B cell (primary cell): ENCODE measurements at regions of chr9 and their contacts with region 1.

Region 1: GRCh38 chr9:134210908-134211810 is 46.8 kb upstream of the RNU6ATAC start:
- DNase-seq: no peak
- ATAC-seq: no peak
- H3K4me3 ChIP-seq: no peak overlapping the region
- H3K4me3 Mint-ChIP-seq: no peak overlapping the region
- H3K27ac ChIP-seq: no peak overlapping the region
- H3K27ac Mint-ChIP-seq: no peak overlapping the region
- H3K4me1 ChIP-seq: peaks cover 7 to 9% of the 10 kb centered on the region in 2 donors
- H3K4me1 Mint-ChIP-seq: peaks cover 5% of the 10 kb centered on the region
- H3K27me3 ChIP-seq: no peaks in the 10 kb centered on the region
- H3K27me3 Mint-ChIP-seq: no peaks in the 10 kb centered on the region
- CTCF ChIP-seq: no peak

Region 2: DNA sequence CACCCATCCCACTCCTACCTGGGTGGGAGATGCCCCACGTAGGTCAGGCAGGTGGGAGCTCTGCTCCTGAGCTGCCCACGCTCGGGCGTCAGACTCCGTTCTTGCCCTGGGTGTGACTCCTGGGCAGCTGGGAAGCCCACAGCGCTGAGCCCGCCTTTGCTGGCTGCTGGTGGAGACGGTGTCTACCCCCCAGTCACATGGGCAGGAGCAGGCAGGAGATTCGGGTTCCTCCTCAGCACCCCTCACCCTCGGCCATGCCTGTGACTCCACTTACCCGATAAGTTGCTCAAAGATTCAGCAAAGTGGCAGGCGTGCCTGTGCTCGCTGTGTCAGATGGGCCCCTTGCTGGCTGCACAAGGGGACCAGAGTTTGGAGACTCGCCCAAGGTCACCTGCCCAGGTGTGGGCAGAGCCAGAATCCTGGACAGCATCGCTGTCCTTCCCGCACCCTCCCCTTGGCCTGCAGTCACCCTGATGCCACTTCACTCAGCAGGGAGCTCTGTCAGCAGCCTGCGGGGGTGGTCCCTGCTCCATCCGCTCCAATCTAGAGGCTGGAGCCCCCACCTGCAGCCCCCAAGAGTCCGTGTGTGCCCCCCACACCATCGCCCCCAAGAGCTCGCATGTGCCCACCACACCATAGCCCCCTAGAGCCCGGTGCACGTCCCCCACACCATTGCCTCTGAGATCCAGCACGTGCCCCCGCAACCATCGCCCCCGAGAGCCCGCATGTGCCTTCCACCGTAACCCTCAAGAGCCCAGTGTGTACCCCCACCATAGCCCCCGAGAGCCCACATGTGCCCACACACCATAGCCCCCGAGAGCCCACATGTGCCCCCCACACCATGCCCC is 1314.3 kb after region 1 on chr9:
- CTCF ChIA-PET with region 1: no interaction called
- POLR2A ChIA-PET with region 1: interaction called, 13 read pairs
- intact Hi-C with region 1: no loop called
- DNase-seq: no peak
- ATAC-seq: no peak
- H3K4me3 ChIP-seq: no peak overlapping the region
- H3K4me3 Mint-ChIP-seq: no peak overlapping the region
- H3K27ac ChIP-seq: no peak overlapping the region
- H3K27ac Mint-ChIP-seq: no peak overlapping the region
- H3K4me1 ChIP-seq: no peaks in the 10 kb centered on the region
- H3K4me1 Mint-ChIP-seq: no peaks in the 10 kb centered on the region
- H3K27me3 ChIP-seq: no peaks in the 10 kb centered on the region
- H3K27me3 Mint-ChIP-seq: peaks cover 5% of the 10 kb centered on the region
- CTCF ChIP-seq: no peak